Right lobe of liver (tissue), 6 donors: ENCODE measurements at regions of chr19 and their contacts with region 1.

Region 1: GRCh38 chr19:43446746-43447489 is 18.5 kb downstream of the LYPD3 start:
- DNase-seq: peak; percentile 79 to 85 (median 83)
- ATAC-seq: peak; percentile 95 to 99 (median 96)
- H3K4me3 ChIP-seq: no peak overlapping the region
- H3K27ac ChIP-seq: no peak overlapping the region
- H3K4me1 ChIP-seq: no peaks in the 10 kb centered on the region
- H3K27me3 ChIP-seq: no peaks in the 10 kb centered on the region
- CTCF ChIP-seq: peak; percentile 90 to 96 (median 95)
- POLR2A ChIP-seq: no peak

Region 2: DNA sequence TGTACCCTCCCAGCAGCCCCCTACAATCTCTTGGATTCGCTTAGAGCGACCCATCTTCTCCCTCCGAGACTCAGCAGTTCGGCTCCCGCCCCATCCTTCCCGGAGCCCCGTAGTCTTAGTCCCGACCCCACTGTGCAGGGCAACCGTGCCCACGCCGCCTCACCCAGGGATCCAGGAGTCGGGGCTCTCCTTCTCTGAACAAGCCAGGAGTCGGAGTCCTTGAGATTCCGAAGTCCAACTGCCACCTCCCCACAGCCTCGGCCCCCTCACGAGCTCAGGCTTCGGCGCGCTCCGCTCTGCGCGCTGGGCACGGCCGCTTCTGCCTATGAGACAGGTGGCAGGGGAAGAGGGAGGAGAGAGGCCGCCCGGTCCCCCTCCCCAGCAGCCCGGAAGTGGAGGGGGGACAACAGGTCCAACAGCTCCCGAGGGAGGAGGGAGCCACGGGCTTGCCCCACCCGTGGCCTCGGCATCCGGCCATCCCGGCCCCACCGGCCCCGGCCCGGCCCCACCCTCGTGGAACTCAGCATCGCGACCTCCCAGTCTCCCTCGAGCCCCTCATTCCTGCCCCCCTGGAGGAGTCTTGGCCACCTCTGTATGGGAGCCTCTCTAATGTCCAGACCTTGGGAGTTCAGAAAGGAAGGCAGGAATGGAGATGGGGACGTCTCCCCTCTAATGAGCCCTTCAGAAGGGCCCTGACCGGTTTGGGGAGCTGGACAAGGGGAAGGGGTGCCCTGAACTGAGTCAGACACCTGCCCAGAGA is 57.7 kb after region 1 on chr19 and contains the start of gene PHLDB3:
- intact Hi-C with region 1: no loop called
- DNase-seq: peak; percentile 55 to 63 (median 60)
- ATAC-seq: peak; percentile 33 to 50 (median 36)
- H3K4me3 ChIP-seq: peak within 1 kb of the TSS; percentile 74 to 90 (median 76)
- H3K27ac ChIP-seq: peak within 1 kb of the TSS; percentile 78 to 91 (median 90)
- H3K4me1 ChIP-seq: peaks cover 0 to 32% (median 7%) of the 10 kb centered on the region in 4 donors
- H3K27me3 ChIP-seq: no peaks in the 10 kb centered on the region
- CTCF ChIP-seq: no peak
- POLR2A ChIP-seq: no peak
- total RNA-seq, gene PHLDB3: 9.6 to 15.0 (median 11.1) TPM

Region 3: GRCh38 chr19:43519436-43520088 is 72.6 kb after region 1 on chr19:
- intact Hi-C with region 1: loop called (anchors 5 kb)
- DNase-seq: peak; percentile 74 to 77 (median 77)
- ATAC-seq: peak; percentile 89 to 96 (median 94)
- H3K4me3 ChIP-seq: no peak overlapping the region
- H3K27ac ChIP-seq: no peak overlapping the region
- H3K4me1 ChIP-seq: peaks cover 0 to 2% (median under 1%) of the 10 kb centered on the region in 4 donors
- H3K27me3 ChIP-seq: no peaks in the 10 kb centered on the region
- CTCF ChIP-seq: peak; percentile 90 to 94 (median 91)
- POLR2A ChIP-seq: no peak

Region 4: DNA sequence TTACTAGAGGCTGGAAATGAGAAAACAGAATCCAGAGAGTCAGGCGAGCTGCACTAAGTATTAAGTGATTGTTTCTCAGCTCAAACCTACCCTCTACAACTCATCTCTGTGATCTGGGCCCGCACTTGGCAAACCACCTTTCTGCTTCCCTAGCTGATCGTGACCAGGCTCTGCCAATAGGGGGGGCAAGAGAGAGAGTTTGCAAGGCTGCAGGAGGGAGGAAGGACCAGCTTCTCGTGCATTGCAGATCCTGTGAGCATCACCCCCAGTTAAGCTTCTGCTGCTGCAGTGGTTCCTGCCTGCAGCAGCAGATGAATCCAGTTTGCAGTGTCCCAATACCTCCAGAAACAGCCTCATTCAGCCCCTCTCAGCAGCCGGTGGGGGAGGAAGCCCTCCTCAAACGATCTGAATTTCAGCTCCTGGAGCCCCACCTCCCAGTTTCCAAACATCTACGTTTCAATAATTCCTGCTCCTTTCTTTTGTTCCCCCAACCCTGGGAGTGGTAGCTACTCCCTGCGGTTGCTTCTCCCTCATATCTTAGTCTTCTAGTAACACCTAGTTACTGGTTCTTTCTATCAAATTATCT is 108.4 kb after region 1 on chr19:
- intact Hi-C with region 1: no loop called
- DNase-seq: peak; percentile 64 to 76 (median 70)
- ATAC-seq: peak; percentile 79 to 95 (median 92)
- H3K4me3 ChIP-seq: no peak overlapping the region
- H3K27ac ChIP-seq: no peak overlapping the region
- H3K4me1 ChIP-seq: no peaks in the 10 kb centered on the region
- H3K27me3 ChIP-seq: no peaks in the 10 kb centered on the region
- CTCF ChIP-seq: peak; percentile 60 to 76 (median 74)
- POLR2A ChIP-seq: no peak

Region 5: DNA sequence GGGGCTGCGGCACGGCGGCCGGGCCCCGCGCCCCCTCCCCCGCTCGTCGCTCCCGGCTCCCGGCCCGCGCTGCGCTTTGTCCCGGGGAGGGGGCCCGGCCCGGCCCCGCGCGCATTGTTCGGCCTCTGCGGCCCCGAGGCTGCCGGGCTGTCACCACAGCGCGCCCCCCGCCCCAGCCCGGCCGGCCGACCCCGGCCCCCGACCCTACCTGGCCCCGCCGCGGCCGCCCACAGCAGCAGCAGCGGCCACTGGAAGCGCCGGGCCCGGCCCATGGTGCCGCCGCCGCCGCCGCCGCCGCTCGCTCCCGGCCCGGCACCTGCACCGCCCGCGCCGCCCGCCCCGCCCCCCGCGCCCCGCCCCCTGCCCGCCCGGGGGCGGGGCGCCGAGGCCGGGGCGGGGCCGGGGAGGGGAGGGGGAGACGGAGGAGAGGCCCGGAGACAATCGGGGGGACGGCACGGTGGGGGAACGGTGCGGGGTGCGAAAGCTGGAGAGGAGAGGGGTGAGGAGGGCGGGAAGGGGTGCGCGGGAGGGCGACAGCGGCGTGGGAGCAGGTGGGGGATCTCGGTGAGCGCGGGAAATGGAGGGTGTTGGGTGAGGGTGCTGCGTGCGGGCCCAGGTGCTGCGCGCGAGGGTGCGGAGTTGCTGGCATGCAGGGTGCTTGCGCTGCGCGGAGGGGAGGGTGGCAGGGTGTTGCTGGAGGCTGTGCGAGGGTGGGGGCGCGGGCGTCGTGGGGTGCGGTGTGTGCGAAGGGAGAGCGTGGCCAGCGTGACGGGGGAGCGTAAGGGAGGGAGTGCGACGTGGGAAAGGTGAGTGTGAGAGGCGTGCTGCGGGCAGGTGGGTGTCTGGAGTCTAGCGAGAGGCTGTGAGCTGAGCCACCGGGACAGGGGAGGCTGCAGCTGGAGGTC is 192.9 kb after region 1 on chr19 and contains the start of gene CADM4:
- intact Hi-C with region 1: loop called in 1 of 2 experiments (anchors 10 kb)
- DNase-seq: peak; percentile 35 to 58 (median 55)
- ATAC-seq: peak; percentile 74 to 89 (median 82)
- H3K4me3 ChIP-seq: peak within 1 kb of the TSS; percentile 26 to 52 (median 44)
- H3K27ac ChIP-seq: no peak within 1 kb of the TSS
- H3K4me1 ChIP-seq: no peaks in the 10 kb centered on the region
- H3K27me3 ChIP-seq: no peaks in the 10 kb centered on the region
- CTCF ChIP-seq: no peak
- POLR2A ChIP-seq: no peak
- total RNA-seq, gene CADM4: 2.2 to 4.7 (median 3.7) TPM